PC-9 (cell line): ENCODE measurements at regions of chr3 and their contacts with region 1.

Region 1: DNA sequence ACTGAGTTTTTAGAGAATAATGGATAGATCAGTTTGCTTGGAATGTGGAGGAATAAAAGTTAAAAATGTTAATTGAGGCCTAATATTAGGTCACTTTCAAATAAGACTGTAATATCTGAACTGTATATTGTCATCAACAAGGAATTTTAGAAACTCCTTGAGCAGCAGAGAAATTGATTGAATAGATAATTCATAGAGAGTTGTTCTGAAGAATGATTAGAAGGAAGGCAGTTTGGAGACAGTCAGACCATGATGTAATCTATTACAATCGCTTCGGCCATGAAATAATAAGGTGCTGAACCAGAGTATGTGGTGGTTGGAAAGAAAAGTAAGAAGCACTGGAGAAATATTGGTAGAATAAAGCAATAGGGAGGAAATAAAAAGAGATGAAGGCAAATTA is 15.7 kb downstream of the ECT2 start:
- DNase-seq: no peak
- H3K4me3 ChIP-seq: no peak overlapping the region
- H3K27ac ChIP-seq: no peak overlapping the region
- H3K4me1 ChIP-seq: no peaks in the 10 kb centered on the region
- H3K27me3 ChIP-seq: no peaks in the 10 kb centered on the region
- CTCF ChIP-seq: no peak

Region 2: DNA sequence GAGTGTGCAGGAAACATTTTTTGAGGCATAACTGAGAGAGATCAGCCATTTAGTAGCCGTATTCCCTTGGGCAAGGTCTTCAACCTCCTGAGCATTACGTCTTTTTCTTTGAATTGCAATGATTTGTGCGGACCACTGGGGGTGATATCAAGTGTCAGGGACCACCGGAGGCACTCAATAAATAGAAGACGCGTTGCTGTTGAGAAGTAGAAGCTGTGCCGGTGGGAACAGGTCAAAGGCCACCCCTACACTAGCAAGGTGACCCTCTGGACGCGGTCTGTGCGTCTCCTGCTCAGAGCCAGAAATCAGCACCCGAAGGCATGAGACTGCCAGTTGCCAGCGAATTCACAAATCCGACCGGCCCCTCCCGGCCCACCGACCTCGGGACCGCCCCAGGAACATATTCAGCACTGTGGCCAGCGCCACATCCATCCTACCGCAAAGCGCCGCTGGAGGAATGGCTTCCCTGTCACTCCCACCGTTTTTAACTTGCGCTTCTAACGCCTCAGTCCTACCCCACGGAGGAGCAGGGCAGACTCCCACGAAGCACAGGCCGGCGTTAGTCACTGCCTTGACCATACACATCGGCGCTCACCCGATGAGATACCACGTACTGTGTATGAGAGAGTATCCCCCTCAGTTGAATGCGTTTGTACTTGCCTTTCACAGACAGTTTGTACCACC is 316.6 kb before region 1 on chr3:
- CTCF ChIA-PET with region 1: no interaction called
- POLR2A ChIA-PET with region 1: interaction called, 11 read pairs
- intact Hi-C with region 1: no loop called
- DNase-seq: no peak
- H3K4me3 ChIP-seq: no peak overlapping the region
- H3K27ac ChIP-seq: no peak overlapping the region
- H3K4me1 ChIP-seq: no peaks in the 10 kb centered on the region
- H3K27me3 ChIP-seq: no peaks in the 10 kb centered on the region
- CTCF ChIP-seq: no peak

Region 3: GRCh38 chr3:172710664-172711453 is 55.4 kb before region 1 on chr3 and contains the start of gene NCEH1:
- CTCF ChIA-PET with region 1: no interaction called
- POLR2A ChIA-PET with region 1: no interaction called
- intact Hi-C with region 1: no loop called
- DNase-seq: peak; percentile 98 to 100
- H3K4me3 ChIP-seq: peak within 1 kb of the TSS; percentile 83
- H3K27ac ChIP-seq: peak within 1 kb of the TSS; percentile 98
- H3K4me1 ChIP-seq: peaks cover 62% of the 10 kb centered on the region
- H3K27me3 ChIP-seq: no peaks in the 10 kb centered on the region
- CTCF ChIP-seq: peak; percentile 89
- total RNA-seq, gene NCEH1: 39.6 and 43.5 TPM in 2 replicates

Region 4: GRCh38 chr3:172800156-172800555 is 33.9 kb after region 1 on chr3:
- CTCF ChIA-PET with region 1: no interaction called
- POLR2A ChIA-PET with region 1: no interaction called
- intact Hi-C with region 1: loop called (anchors 5 kb)
- DNase-seq: no peak
- H3K4me3 ChIP-seq: no peak overlapping the region
- H3K27ac ChIP-seq: no peak overlapping the region
- H3K4me1 ChIP-seq: no peaks in the 10 kb centered on the region
- H3K27me3 ChIP-seq: no peaks in the 10 kb centered on the region
- CTCF ChIP-seq: no peak

Region 5: DNA sequence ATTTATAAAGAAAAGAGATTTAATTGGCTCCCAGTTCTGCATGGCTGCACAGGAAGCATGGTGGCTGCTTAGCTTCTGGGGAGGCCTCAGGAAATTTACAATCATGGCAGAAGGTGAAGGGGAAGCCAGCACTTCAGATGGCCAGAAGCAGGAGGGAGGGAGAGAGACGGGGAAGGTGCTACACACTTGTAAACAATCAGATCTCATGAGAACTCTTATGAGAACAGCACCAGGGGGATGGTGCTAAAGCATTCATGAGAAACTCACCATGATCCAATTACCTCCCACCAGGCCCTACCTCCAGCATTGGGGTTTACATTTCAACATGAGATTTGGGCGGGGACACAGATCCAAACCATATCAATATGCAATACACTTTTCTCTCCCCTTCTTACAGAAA is 58.0 kb after region 1 on chr3:
- CTCF ChIA-PET with region 1: no interaction called
- POLR2A ChIA-PET with region 1: no interaction called
- intact Hi-C with region 1: no loop called
- DNase-seq: no peak
- H3K4me3 ChIP-seq: no peak overlapping the region
- H3K27ac ChIP-seq: no peak overlapping the region
- H3K4me1 ChIP-seq: no peaks in the 10 kb centered on the region
- H3K27me3 ChIP-seq: no peaks in the 10 kb centered on the region
- CTCF ChIP-seq: no peak